ENCODE measurements at regions of chr17 and their contacts with region 1.

Region 1: DNA sequence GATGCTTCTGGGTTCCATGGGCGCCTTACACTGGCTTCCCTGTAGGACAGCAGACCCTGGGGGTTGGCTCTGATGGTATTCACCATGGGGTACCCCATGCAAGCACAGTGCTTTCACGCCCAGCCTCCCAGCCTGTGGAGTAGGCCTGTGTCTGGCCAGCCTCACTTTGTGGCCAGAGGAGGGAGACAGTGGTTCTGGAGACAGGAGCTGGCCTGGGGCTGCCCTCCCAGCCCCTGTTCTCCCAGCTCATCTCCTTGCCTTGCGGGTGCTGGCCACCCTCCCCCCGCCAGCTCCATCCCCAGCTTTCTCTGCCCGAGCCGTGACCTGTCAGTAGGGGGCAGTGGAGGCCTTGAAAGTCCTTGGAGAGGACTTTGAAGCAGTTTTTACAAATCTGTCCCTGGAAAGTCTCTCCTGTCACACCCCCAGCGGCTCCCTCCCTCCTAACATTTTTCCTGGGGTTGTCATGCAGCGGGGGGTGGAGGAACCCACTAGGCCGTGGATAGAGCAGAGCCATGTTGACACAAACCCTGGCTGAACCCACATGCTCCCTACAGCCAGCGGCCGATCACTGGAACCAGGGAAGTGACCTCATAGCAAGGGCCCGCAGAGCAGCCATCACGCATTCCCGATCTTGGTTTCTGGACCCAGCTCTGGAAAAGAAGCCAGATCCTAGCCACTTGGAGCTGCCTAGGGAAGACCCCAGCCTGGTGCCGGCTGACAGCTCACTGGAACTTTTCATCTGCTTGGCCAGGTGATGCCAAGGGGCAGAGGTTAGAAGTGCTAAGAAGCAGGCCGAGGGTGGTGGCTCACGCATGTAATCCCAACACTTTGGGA is 289.4 kb downstream of the SEC14L1 start:
- DNase-seq: peak; percentile 86 to 95
- H3K4me3 ChIP-seq: no peak overlapping the region
- H3K27ac ChIP-seq: 0 out of 2 replicates have a peak overlapping the region, but pooled peaks have one; percentile 12
- H3K4me1 ChIP-seq: peaks cover 0 to 56% (median 45%) of the 10 kb centered on the region in 4 experiments; a peak in 6 of 7 replicates
- H3K27me3 ChIP-seq: no peaks in the 10 kb centered on the region
- CTCF ChIP-seq: peak; percentile 61 to 88 (median 84)
- EP300 ChIP-seq: no peak
- POLR2A ChIP-seq: no peak
- RAD21 ChIP-seq: peak; percentile 79 to 85

Region 2: GRCh38 chr17:77247048-77247541 is 183.0 kb before region 1 on chr17:
- CTCF ChIA-PET with region 1: no interaction called
- POLR2A ChIA-PET with region 1: no interaction called
- DNase-seq: peak; percentile 51 to 96
- H3K4me3 ChIP-seq: peak overlapping the region; percentile 17 to 76 (median 50)
- H3K27ac ChIP-seq: no peak overlapping the region
- H3K4me1 ChIP-seq: peaks cover 0 to 4% (median 1%) of the 10 kb centered on the region in 4 experiments; a peak in 2 of 7 replicates
- H3K27me3 ChIP-seq: peaks cover 0 to 9% (median 3%) of the 10 kb centered on the region in 4 experiments; a peak in 4 of 7 replicates
- CTCF ChIP-seq: peak; percentile 68 to 87 (median 83)
- EP300 ChIP-seq: no peak
- POLR2A ChIP-seq: no peak
- RAD21 ChIP-seq: peak; percentile 84 to 86

Region 3: GRCh38 chr17:77356109-77356689 is 73.9 kb before region 1 on chr17:
- CTCF ChIA-PET with region 1: interaction called, 17 read pairs
- POLR2A ChIA-PET with region 1: no interaction called
- DNase-seq: no peak
- H3K4me3 ChIP-seq: no peak overlapping the region
- H3K27ac ChIP-seq: no peak overlapping the region; the same call in 1 of the 2 replicates
- H3K4me1 ChIP-seq: peaks cover 0 to 8% (median 2%) of the 10 kb centered on the region in 4 experiments; a peak in 5 of 7 replicates
- H3K27me3 ChIP-seq: no peaks in the 10 kb centered on the region
- CTCF ChIP-seq: no peak
- EP300 ChIP-seq: no peak
- POLR2A ChIP-seq: no peak
- RAD21 ChIP-seq: no peak

Region 4: DNA sequence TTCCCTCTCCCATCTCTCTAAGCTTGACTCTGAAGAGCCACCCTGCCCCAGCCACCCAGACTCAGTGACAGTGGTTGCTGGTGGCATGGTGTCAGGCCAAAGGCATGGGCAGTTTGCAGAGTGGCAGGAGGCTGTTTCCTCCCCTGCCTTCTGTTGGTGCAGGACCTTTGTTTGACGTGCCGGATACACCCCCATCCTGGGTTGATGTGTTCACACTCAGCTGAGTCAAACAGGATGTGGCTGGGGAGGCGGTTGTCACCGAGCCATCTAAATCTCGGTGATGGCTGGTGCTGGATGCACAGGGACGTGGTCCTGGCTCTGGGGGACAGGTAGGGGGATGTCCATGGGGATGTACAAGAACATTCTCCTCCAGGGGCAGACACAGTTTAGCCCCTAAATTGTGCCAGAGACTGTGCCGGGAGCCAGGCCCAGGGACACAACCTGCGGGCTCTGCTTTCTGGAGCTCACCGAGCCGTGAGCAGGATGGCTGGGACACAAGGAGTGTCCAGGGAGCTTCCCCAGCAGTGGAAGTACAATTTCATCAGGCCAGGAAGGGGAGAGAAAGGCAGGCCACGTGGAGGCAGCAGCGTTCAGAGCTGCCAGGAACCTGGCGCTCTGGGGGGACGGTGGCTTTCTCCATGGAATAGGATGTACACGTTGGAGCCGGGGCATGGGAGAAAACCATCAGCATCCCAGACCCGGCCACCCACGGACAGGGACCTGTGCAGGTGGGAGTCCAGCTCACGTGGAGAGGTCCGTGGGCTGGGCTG is 25.1 kb before region 1 on chr17:
- CTCF ChIA-PET with region 1: interaction called, 512 read pairs
- POLR2A ChIA-PET with region 1: no interaction called
- DNase-seq: no peak
- H3K4me3 ChIP-seq: no peak overlapping the region
- H3K27ac ChIP-seq: no peak overlapping the region
- H3K4me1 ChIP-seq: peaks cover 6 to 25% (median 15%) of the 10 kb centered on the region in 4 experiments
- H3K27me3 ChIP-seq: no peaks in the 10 kb centered on the region
- CTCF ChIP-seq: no peak
- EP300 ChIP-seq: no peak
- POLR2A ChIP-seq: no peak
- RAD21 ChIP-seq: no peak

Region 5: GRCh38 chr17:77451245-77451893 is 21.2 kb after region 1 on chr17:
- CTCF ChIA-PET with region 1: interaction called, 51 read pairs
- POLR2A ChIA-PET with region 1: interaction called, 23 read pairs
- DNase-seq: peak; percentile 71 to 88
- H3K4me3 ChIP-seq: peak overlapping the region; percentile 50 to 78 (median 61)
- H3K27ac ChIP-seq: peak overlapping the region; percentile 66
- H3K4me1 ChIP-seq: peaks cover 26 to 45% (median 36%) of the 10 kb centered on the region in 4 experiments
- H3K27me3 ChIP-seq: no peaks in the 10 kb centered on the region
- CTCF ChIP-seq: no peak
- EP300 ChIP-seq: 0 out of 3 replicates have a peak, but pooled peaks of 1 of the 2 experiments have one; percentile 12
- POLR2A ChIP-seq: peak; percentile 46 to 80
- RAD21 ChIP-seq: no peak; a peak in 1 of 4 replicates

Region 6: DNA sequence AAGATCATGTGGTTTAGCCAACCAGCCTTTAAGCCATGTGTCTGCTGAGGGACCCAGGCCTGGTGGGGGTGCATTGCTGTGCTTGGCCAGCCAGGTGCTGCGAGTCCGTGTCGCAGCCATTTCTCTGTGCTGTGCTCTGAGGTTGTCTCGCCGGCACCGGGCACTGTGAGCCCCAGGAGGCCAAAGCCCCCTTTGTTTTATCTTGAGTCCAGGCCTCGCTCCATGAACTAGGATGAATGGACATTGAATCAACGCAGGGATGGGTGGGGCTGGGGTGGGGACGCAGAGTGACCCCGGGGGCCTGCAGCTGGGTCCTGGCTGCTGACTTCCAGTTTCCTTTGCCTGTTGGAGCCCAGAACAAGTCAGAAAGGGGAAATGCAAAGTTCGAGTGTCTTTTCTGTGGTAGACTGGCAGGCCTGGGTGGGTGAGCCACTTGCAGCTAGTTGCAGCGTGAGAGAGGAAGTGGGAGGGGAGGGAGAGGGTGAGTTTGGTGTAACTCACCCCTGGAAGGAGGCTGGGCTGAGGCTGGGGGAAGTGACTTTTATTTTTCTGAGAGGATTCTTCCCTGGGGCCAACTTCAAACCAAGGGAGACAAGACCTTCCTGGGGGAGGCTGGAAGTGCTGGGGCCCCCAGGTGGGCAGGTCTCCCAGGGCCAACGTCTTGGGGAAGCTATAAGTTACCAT is 35.4 kb after region 1 on chr17:
- CTCF ChIA-PET with region 1: interaction called, 29 read pairs
- POLR2A ChIA-PET with region 1: interaction called, 4 read pairs
- DNase-seq: peak in 1 of 2 experiments; percentile 63
- H3K4me3 ChIP-seq: peak overlapping the region in 3 of 4 experiments; percentile 17 to 52 (median 17); a peak in 4 of 8 replicates
- H3K27ac ChIP-seq: peak overlapping the region; percentile 76
- H3K4me1 ChIP-seq: peaks cover 21 to 32% (median 26%) of the 10 kb centered on the region in 4 experiments
- H3K27me3 ChIP-seq: no peaks in the 10 kb centered on the region
- CTCF ChIP-seq: no peak
- EP300 ChIP-seq: no peak
- POLR2A ChIP-seq: no peak
- RAD21 ChIP-seq: no peak

Region 7: GRCh38 chr17:77476931-77477877 is 47.1 kb after region 1 on chr17:
- CTCF ChIA-PET with region 1: interaction called, 29 read pairs
- POLR2A ChIA-PET with region 1: interaction called, 3 read pairs
- DNase-seq: no peak
- H3K4me3 ChIP-seq: no peak overlapping the region
- H3K27ac ChIP-seq: peak overlapping the region; percentile 41; the same call in 1 of the 2 replicates
- H3K4me1 ChIP-seq: peaks cover 14 to 69% (median 45%) of the 10 kb centered on the region in 4 experiments
- H3K27me3 ChIP-seq: no peaks in the 10 kb centered on the region
- CTCF ChIP-seq: no peak
- EP300 ChIP-seq: no peak
- POLR2A ChIP-seq: no peak
- RAD21 ChIP-seq: no peak

Region 8: GRCh38 chr17:77501101-77501566 is 71.0 kb after region 1 on chr17:
- CTCF ChIA-PET with region 1: interaction called, 95 read pairs
- POLR2A ChIA-PET with region 1: interaction called, 3 read pairs
- DNase-seq: no peak
- H3K4me3 ChIP-seq: no peak overlapping the region
- H3K27ac ChIP-seq: no peak overlapping the region
- H3K4me1 ChIP-seq: peaks cover 0 to 7% (median 0%) of the 10 kb centered on the region in 4 experiments; a peak in 1 of 7 replicates
- H3K27me3 ChIP-seq: no peaks in the 10 kb centered on the region
- CTCF ChIP-seq: peak; percentile 15 to 50 (median 21); a peak in 3 of 4 replicates
- EP300 ChIP-seq: no peak
- POLR2A ChIP-seq: no peak
- RAD21 ChIP-seq: peak in 1 of 2 experiments; percentile 39; a peak in 3 of 4 replicates

Region 9: GRCh38 chr17:77606865-77607210 is 176.7 kb after region 1 on chr17:
- CTCF ChIA-PET with region 1: no interaction called
- POLR2A ChIA-PET with region 1: no interaction called
- DNase-seq: peak in 1 of 2 experiments; percentile 43
- H3K4me3 ChIP-seq: no peak overlapping the region
- H3K27ac ChIP-seq: no peak overlapping the region
- H3K4me1 ChIP-seq: no peaks in the 10 kb centered on the region; a peak in 1 of 7 replicates
- H3K27me3 ChIP-seq: no peaks in the 10 kb centered on the region; a peak in 2 of 7 replicates
- CTCF ChIP-seq: peak in 1 of 3 experiments; percentile 15; a peak in 1 of 4 replicates
- EP300 ChIP-seq: no peak
- POLR2A ChIP-seq: no peak
- RAD21 ChIP-seq: no peak